Activated CD8-positive, alpha-beta memory T cell treated with anti-CD3 and anti-CD28 coated beads, Interleukin-2, amount 10 ng/mL, durations not matched to agents 7 days and 5 days (primary cell): ENCODE measurements at regions of chr5 and their contacts with region 1.

Region 1: DNA sequence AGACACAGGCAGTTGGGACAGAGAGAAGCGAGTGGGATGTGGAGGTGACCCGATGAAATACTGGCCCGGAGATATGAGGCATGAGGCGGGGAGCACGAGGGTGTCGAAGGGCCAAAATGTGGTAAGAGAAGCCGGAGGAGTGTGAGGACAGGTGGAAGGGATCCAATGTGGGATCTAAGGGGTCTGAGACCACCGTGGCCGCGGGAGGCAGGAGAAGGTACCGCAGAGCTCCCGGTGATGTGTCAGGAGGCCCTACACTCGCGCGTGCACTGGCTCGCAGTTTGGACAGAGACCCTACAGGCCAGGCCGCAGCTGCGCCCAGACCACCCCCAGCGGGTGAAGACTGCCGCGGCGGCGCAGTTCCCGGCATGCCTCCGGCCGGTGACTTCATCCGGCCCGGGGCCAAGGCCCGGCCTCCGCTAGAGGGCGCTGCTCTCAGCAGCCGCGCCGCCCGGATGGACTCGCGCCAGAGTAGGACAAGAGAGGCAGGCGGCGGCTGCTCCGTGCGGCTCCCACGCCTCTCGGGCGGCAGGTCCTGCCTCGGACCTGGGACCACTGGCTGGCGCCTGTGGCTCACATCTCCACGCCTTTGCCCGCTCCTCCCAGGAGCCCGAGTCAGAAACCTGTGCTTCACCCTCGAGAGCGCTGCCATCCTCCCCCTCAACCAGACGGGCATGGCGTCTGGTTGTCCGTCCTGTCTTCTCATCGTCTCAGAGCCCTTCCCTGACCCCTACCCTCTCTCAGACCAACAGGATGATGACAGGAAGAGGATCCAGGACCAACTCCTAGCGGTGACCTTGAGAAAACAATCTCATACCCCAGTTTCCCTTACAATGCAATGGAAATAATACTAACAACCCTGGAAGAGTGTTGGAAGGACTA is 35.4 kb upstream of the STING1 start:
- DNase-seq: peak; percentile 92
- ATAC-seq: peak; percentile 97
- H3K4me3 Mint-ChIP-seq: peak overlapping the region; percentile 78
- H3K27ac Mint-ChIP-seq: peak overlapping the region; percentile 90
- H3K4me1 Mint-ChIP-seq: peaks cover 34% of the 10 kb centered on the region
- H3K27me3 Mint-ChIP-seq: no peaks in the 10 kb centered on the region

Region 2: DNA sequence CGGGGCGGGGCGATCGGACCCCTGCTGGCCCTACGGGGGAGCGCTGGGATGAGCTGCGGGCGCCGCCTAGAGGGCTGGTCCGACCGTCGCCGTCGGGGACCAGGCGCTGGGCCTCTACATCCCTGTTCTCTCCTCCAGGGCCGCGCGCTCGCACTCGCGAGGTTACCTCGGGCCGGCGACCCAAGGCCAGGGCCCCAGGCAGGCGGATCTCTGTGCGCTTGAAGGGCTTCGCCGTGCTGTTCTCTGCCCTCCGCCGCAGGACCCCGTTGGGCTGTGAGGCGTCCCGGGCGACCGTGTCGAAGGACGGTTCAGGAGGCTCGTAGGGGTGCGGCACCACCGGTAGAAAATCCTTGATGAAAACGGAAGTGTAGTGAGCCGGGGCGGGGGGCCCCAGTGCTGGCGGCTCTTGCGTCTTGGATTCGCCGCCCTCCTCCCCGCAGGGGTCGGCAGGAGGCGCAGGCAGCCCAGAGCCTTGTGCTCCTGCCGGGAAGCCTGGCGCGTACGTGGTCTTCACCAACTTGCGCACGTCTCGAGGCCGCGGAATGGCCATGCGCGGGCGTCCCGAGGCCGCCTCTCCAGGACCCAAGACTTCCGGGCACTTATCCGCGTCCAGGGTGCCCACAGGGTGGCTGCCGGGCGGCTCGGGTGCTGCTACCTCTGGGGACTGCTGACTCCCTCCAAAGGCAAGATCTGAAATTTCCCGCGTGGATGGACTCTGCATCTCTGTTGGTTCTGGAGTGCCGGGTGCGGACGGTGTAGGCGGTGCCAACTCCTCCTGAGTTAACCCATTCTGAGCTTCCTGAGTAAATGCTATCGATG is 125.0 kb before region 1 on chr5:
- CTCF ChIA-PET with region 1: interaction called, 10 read pairs
- DNase-seq: peak; percentile 95
- ATAC-seq: peak; percentile 74
- H3K4me3 Mint-ChIP-seq: peak overlapping the region; percentile 96
- H3K27ac Mint-ChIP-seq: peak overlapping the region; percentile 92
- H3K4me1 Mint-ChIP-seq: peaks cover 63% of the 10 kb centered on the region
- H3K27me3 Mint-ChIP-seq: no peaks in the 10 kb centered on the region

Region 3: DNA sequence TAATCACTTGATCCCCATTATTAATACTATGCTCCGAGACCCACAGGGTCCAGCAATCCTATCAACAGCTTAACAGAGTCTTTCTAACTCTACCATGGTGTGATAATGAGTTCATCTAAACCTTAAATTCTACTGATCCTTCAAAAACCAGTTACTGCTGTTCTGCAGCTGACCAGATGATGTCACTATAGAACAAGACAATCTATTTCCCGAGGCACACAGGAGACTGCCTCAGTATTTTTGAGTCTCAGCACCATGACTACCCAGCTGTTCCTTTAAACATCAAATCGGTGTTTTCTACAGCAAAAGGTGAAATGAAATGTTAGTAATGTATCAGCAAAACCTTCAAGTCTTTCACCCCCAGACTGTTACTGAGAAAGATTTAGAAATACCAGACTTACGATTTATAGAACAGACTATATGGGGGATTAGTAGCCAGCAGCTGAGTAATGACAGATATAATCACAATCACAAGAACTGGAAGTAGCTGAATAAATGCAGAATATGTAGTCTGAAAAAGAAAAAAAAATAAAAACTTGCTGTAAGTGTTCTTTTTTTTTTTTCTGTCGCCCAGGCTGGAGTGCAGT is 95.5 kb before region 1 on chr5:
- CTCF ChIA-PET with region 1: interaction called, 423 read pairs
- DNase-seq: peak; percentile 73
- ATAC-seq: peak; percentile 92
- H3K4me3 Mint-ChIP-seq: no peak overlapping the region
- H3K27ac Mint-ChIP-seq: peak overlapping the region; percentile 64
- H3K4me1 Mint-ChIP-seq: peaks cover 25% of the 10 kb centered on the region
- H3K27me3 Mint-ChIP-seq: no peaks in the 10 kb centered on the region

Region 4: DNA sequence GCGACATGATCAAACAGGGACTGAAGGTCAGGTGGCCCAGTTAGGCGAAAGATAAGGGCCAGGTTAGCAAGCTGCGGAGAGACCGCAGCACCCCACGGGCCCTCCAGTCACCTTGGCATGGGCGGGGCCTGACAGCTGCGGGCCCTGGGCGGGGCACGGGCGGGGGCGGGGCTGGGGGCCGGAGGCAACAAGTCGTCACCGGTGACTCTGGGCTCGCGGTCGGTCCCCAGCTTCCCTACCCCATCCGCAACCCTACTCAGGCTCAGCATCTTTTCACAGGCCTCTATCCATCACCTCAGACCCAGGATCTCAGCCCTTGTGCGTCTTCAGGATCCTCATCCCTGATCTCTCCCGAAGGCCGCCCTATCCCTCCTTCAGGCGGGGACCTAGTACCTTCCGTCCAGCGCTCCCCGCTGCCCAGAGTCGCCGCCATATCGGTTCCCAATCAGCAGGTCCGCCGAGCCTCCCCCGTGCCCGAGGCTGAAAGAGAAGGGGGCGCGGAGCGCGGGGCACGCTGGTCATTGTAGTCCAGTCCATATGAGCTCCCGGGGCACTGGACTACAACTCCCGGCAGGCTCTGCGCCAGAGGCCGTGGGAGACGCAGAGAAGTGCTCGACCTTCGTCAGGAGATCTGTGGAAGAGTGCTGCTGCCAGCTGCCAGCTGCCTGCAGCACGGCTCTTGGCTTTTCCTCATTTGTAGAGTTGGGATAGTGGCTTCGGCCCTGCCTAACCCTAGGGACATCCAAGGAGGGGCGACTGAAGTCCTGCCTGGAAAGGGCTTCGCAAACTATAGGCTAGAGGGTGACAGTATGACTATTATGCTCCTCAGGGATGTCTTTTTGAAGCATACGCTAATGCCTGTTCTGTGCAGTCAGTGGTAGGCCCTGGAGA is 78.7 kb before region 1 on chr5 and contains the start of gene DNAJC18:
- CTCF ChIA-PET with region 1: interaction called, 25 read pairs
- DNase-seq: peak; percentile 94
- ATAC-seq: peak; percentile 89
- H3K4me3 Mint-ChIP-seq: peak within 1 kb of the TSS; percentile 98
- H3K27ac Mint-ChIP-seq: peak within 1 kb of the TSS; percentile 99
- H3K4me1 Mint-ChIP-seq: peaks cover 70% of the 10 kb centered on the region
- H3K27me3 Mint-ChIP-seq: no peaks in the 10 kb centered on the region
- total RNA-seq, gene DNAJC18: 9.2 to 25.7 TPM

Region 5: DNA sequence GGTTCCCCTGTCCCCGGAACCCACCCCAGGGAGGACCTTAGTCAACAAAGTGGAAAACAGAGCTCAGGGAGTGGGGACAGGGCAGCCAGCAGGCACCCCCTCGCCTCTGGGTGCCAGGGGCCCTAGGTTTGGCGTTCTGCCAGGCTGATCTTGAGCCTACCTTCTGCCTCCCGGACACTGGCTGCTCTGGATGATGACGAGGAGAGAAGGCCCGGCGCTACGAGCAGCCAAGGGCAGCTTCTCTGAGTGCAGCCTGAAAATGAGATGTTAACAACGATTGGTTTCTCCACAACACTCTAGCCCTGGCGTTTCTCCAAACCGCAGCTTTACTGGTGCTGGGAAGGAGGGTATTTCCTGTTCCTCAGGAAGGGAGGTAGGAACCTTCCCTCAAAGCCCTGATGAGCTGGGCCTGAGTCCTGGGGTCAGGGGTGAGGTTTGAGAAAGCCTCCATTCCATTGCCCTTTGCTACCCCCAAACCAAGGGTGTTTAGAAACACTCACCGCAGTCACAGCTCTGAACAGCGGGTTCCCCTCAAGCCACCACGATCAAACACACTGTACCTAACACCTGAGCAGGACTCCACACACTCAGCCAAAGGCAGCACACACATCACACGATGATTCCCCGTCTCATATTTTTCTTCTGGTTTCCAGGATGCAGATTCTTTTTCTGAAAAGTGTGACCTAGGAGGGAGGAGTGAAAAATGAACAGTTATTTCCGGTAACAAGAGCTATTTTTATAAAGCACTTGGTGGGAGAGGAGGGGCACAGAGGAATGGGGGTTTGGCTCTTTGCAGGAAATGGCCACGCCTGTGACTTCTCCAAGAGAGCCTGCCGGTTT is 35.7 kb before region 1 on chr5 and contains the start of gene STING1:
- CTCF ChIA-PET with region 1: interaction called, 12 read pairs
- DNase-seq: peak; percentile 76
- ATAC-seq: peak; percentile 72
- H3K4me3 Mint-ChIP-seq: peak within 1 kb of the TSS; percentile 89
- H3K27ac Mint-ChIP-seq: peak within 1 kb of the TSS; percentile 98
- H3K4me1 Mint-ChIP-seq: peaks cover 35% of the 10 kb centered on the region
- H3K27me3 Mint-ChIP-seq: no peaks in the 10 kb centered on the region
- total RNA-seq, gene STING1: 103 to 115 TPM